BJ (cell line): ENCODE measurements at regions of chr11 and their contacts with region 1.

Region 1: GRCh38 chr11:47928426-47928825 is 51.9 kb upstream of the PTPRJ start:
- DNase-seq: no peak
- H3K4me3 ChIP-seq: no peak overlapping the region
- H3K27me3 ChIP-seq: no peaks in the 10 kb centered on the region
- CTCF ChIP-seq: no peak

Region 2: GRCh38 chr11:47907499-47907898 is 20.9 kb before region 1 on chr11:
- CTCF ChIA-PET with region 1: no interaction called
- POLR2A ChIA-PET with region 1: interaction called, 17 read pairs
- DNase-seq: no peak
- H3K4me3 ChIP-seq: no peak overlapping the region
- H3K27me3 ChIP-seq: no peaks in the 10 kb centered on the region
- CTCF ChIP-seq: no peak

Region 3: DNA sequence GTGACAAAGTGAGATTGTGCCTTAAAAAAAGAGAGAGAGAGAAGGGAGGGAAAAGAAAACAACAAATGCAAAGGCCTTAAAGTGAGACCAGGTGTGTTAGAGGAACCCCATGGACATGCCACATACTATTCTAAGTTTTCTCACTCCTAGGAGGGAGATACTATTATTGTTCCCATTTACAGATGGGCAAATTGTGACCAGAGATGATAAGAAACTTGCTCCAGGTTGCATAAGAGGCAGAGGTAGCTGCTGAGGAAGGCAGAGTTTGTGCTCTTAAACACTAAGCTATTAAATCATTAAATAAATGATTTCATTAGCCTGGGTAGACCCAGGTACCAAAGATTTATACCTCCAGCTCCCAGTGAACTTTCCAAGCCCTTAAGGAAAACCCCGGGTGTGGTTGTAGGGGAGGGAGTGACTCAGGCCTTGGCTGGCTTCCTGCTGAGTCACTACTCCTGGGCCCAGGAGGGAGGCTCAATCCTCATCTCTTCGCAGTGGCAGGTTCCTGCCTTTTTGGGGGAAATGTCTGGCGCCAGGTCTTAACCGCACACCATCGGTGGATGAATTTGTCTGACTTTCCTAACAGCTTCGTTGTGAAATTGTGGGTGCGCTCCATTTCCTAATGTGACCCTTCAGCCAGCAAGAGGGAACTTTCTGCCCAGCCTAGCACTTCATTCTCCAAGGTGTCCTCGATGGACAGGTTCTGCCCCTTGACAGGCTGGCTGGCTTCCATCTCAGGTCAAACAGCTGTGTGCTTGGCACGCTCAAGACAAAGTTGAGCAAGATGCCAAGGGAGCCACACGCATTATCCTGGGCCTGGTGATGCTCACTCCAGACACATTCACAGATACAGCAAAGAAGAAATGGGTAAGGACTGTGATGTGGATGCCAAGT is 18.5 kb after region 1 on chr11:
- CTCF ChIA-PET with region 1: interaction called, 24 read pairs
- POLR2A ChIA-PET with region 1: no interaction called
- DNase-seq: peak; percentile 80
- H3K4me3 ChIP-seq: no peak overlapping the region
- H3K27me3 ChIP-seq: no peaks in the 10 kb centered on the region
- CTCF ChIP-seq: no peak

Region 4: DNA sequence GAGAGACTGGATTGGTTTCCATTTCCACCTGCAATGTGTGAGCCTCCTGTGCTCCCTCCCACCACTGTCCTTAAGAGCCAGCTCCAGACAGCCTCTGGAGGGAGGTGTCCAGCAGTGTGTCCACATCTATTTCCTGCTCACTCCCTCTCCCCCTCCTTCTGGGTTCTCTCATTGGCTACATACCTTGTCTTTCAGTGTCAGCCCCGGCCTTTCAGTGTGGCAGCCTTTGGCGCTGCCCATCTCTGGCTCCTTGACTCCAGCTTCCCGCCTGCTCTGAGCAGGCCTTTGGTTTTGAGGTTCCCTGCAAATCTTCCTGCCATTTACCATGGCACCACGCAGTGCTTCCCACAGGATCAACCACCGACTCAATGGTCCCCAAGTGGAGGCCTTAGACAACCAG is 33.0 kb after region 1 on chr11:
- CTCF ChIA-PET with region 1: no interaction called
- POLR2A ChIA-PET with region 1: no interaction called
- DNase-seq: no peak
- H3K4me3 ChIP-seq: no peak overlapping the region
- H3K27me3 ChIP-seq: no peaks in the 10 kb centered on the region
- CTCF ChIP-seq: no peak

Region 5: DNA sequence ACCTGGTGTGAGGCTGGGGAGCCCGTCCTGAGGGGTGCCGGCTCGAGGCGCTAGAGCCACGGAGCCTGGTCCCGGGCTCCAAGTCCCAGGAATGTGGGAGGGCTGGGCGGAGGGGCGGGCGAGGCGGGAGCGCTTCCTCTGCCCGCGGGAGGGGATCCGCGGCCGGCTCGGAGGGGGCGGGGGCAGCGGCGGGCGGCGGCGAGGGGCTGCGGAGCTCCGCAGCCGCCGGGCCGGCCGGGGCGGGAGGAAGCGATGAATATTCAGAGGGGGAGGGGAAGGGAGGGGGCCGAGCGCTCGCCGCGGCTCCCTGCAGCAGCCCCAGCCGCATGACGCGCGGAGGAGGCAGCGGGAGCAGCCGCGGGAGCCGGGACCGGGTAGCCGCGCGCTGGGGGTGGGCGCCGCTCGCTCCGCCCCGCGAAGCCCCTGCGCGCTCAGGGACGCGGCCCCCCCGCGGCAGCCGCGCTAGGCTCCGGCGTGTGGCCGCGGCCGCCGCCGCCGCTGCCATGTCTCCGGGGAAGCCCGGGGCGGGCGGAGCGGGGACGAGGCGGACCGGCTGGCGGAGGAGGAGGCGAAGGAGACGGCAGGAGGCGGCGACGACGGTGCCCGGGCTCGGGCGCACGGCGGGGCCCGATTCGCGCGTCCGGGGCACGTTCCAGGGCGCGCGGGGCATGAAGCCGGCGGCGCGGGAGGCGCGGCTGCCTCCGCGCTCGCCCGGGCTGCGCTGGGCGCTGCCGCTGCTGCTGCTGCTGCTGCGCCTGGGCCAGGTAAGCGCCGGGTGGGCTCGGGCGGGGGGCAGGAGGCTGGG is 52.0 kb after region 1 on chr11 and contains the start of gene PTPRJ:
- CTCF ChIA-PET with region 1: interaction called, 14 read pairs
- POLR2A ChIA-PET with region 1: no interaction called
- DNase-seq: no peak
- H3K4me3 ChIP-seq: peak within 1 kb of the TSS; percentile 81
- H3K27me3 ChIP-seq: no peaks in the 10 kb centered on the region
- CTCF ChIP-seq: no peak
- polyA plus RNA-seq, gene PTPRJ: 3.8 and 4.9 TPM in 2 replicates

Region 6: DNA sequence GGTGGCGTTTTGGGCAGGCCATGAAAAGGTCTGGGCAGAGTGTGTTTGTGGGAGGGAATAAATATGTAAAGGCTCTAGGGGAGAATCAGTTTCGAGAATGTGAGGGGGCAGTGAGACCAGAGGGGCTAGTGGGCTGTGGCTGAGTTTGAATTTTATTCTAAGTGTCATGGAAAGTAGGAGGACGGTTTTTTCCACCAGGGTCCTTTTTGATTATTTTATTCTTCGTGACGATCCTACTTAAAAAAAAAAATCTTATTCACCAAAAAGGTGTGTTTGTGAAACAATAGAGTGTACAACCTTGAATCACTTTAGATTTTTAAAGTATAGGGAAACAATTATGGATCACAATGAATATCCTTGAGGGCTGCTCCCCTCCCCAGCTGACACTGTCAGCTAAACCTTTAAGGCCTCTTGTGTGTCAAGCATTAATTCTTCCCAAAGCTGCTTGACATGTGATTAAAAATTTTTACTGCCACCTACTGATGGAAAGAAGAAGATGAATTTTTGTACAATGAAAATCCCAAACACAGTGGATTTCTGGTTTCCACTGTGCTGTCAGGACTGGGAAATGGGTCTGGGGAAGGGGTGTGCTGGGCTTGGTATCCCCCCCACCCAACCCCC is 180.7 kb after region 1 on chr11:
- CTCF ChIA-PET with region 1: interaction called, 171 read pairs
- POLR2A ChIA-PET with region 1: interaction called, 3 read pairs
- DNase-seq: no peak
- H3K4me3 ChIP-seq: no peak overlapping the region; the same call in 1 of the 2 replicates
- H3K27me3 ChIP-seq: no peaks in the 10 kb centered on the region
- CTCF ChIP-seq: peak; percentile 44